CD8-positive, alpha-beta memory T cell (primary cell): ENCODE measurements at regions of chr2 and their contacts with region 1.

Region 1: DNA sequence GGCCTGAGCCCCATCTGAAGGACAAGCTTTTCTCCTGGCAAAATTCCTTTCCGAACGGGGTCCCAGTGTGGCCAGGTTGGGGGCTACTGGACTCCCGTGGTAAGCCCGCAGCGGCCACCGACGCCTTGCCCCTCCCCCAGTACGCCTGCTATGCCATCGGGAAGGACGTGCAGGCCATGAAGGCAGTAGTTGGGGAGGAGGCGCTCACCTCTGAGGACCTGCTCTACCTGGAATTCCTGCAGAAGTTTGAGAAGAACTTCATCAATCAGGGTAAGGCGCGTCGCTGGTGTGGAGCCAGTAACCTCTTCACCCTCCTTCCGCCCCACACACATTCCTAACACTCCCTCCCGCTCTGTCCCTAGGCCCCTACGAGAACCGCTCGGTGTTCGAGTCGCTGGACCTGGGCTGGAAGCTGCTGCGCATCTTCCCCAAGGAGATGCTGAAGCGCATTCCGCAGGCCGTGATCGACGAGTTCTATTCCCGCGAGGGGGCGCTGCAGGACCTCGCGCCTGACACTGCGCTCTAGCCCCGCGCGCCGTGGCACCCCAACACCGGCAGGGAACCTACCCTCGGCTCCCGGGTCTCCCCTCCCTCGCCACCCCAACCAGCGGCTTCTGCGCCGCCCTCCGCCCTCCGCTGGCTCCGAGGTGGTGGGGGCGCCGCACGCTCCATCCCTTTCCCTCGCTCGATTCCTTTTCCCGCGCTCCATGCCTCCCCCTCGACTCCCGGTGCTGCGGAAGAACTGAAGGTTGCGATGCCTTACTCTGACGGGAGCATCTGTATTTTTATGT is 13.6 kb upstream of the ANKRD53 start:
- DNase-seq: peak; percentile 75 to 84 (median 76)
- H3K4me3 ChIP-seq: peak overlapping the region; percentile 72
- H3K4me3 Mint-ChIP-seq: peak overlapping the region; percentile 69 to 90 (median 85)
- H3K27ac ChIP-seq: no peak overlapping the region
- H3K27ac Mint-ChIP-seq: peak overlapping the region in 5 of 8 donors; percentile 27 to 87 (median 60)
- H3K4me1 ChIP-seq: peaks cover 6% of the 10 kb centered on the region
- H3K4me1 Mint-ChIP-seq: peaks cover 5 to 8% (median 8%) of the 10 kb centered on the region in 3 donors
- H3K27me3 ChIP-seq: peaks cover 5% of the 10 kb centered on the region
- H3K27me3 Mint-ChIP-seq: peaks cover 15 to 29% of the 10 kb centered on the region in 2 donors

Region 2: DNA sequence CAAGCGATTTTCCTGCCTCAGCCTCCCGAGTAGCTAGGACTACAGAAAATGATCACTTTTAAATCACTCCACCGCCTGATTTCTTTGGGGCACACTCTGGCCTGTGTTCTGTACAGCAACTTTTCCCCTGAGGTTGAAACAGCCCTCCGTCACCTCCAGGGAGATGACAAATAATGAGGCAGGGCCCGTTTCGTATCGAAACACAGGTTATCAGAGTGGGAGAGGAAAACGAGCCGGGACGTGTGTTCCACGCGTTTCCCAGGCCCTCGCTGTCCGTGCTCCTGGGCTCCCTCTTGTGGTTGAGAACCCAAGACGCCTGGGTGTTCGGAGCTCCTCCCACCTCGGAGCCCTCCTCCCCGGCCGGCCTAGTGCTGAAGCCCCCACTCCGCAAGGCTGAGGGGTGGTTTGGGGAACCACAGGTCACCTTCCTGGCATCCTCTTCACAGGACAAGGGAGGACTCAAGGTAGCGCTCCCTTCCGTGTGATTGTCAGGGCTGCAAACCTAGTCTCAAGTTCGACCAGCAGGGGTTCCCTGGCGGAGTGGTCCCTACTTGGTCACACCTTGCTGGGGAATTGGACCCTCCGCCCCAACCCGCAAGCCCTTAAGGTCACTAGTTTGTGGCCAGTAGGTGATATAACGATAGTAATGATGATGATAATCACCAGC is 16.3 kb before region 1 on chr2:
- CTCF ChIA-PET with region 1: interaction called, 20 read pairs
- POLR2A ChIA-PET with region 1: no interaction called
- DNase-seq: peak; percentile 56 to 78 (median 68)
- H3K4me3 ChIP-seq: peak overlapping the region; percentile 40
- H3K4me3 Mint-ChIP-seq: peak overlapping the region; percentile 53 to 89 (median 84)
- H3K27ac ChIP-seq: no peak overlapping the region
- H3K27ac Mint-ChIP-seq: peak overlapping the region in 6 of 8 donors; percentile 12 to 89 (median 73)
- H3K4me1 ChIP-seq: peaks cover 13% of the 10 kb centered on the region
- H3K4me1 Mint-ChIP-seq: peaks cover 14 to 17% (median 17%) of the 10 kb centered on the region in 3 donors
- H3K27me3 ChIP-seq: no peaks in the 10 kb centered on the region
- H3K27me3 Mint-ChIP-seq: peaks cover 16 to 31% of the 10 kb centered on the region in 2 donors

Region 3: GRCh38 chr2:70975091-70975636 is 10.4 kb after region 1 on chr2:
- CTCF ChIA-PET with region 1: interaction called, 89 read pairs
- POLR2A ChIA-PET with region 1: no interaction called
- DNase-seq: no peak
- H3K4me3 ChIP-seq: no peak overlapping the region
- H3K4me3 Mint-ChIP-seq: no peak overlapping the region
- H3K27ac ChIP-seq: no peak overlapping the region
- H3K27ac Mint-ChIP-seq: peak overlapping the region in 3 of 8 donors; percentile 4 to 84 (median 55)
- H3K4me1 ChIP-seq: peaks cover 18% of the 10 kb centered on the region
- H3K4me1 Mint-ChIP-seq: peaks cover 15 to 23% (median 18%) of the 10 kb centered on the region in 3 donors
- H3K27me3 ChIP-seq: no peaks in the 10 kb centered on the region
- H3K27me3 Mint-ChIP-seq: peaks cover 2 to 4% of the 10 kb centered on the region in 2 donors

Region 4: GRCh38 chr2:70984576-70985282 is 19.9 kb after region 1 on chr2:
- CTCF ChIA-PET with region 1: interaction called, 89 read pairs
- POLR2A ChIA-PET with region 1: no interaction called
- DNase-seq: peak; percentile 71 to 85 (median 74)
- H3K4me3 ChIP-seq: no peak overlapping the region
- H3K4me3 Mint-ChIP-seq: peak overlapping the region in 3 of 7 donors; percentile 22 to 39 (median 23)
- H3K27ac ChIP-seq: no peak overlapping the region
- H3K27ac Mint-ChIP-seq: peak overlapping the region in 3 of 8 donors; percentile 24 to 70 (median 46)
- H3K4me1 ChIP-seq: peaks cover 7% of the 10 kb centered on the region
- H3K4me1 Mint-ChIP-seq: peaks cover 20 to 23% (median 22%) of the 10 kb centered on the region in 3 donors
- H3K27me3 ChIP-seq: no peaks in the 10 kb centered on the region
- H3K27me3 Mint-ChIP-seq: no peaks in the 10 kb centered on the region

Region 5: DNA sequence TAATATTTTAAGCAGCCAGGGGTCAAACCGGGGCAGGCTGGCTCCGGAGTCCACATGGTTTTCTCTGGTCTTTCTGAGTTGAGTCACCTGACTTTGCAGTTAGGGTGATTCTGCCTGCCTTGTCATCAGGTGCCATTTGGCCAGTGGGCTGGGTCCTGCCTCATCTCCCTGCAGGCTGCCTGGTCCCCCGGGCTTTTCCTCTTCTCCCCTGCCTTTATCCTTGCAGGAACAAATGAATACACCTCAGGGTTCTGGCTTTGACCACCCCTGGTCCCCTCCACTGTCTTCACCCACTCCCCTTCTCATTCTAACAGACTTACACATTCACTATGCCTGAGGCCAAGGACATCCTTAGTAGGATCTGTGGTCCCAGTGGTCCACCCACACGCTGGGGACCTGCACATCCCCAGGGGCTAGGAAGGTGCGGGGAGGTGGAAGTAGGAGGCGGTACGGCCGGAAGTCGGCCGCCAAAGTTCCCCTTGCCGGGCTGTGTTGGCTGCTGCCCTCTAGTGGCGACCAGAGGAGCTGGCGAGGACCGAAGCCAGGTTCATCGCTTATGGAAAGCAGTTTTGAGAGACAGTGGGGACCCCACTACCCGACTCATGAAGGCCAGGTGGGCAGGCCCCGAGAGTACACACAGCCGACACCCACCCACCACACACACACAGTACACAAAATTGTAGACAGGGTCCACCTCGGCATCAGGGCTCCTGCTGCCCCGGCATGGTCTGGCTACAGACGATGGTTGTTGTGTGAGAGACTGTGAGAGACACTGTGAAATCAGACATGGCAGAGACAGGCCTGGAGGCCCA is 36.2 kb after region 1 on chr2:
- CTCF ChIA-PET with region 1: interaction called, 46 read pairs
- POLR2A ChIA-PET with region 1: no interaction called
- DNase-seq: peak; percentile 70 to 88 (median 74)
- H3K4me3 ChIP-seq: peak overlapping the region; percentile 62
- H3K4me3 Mint-ChIP-seq: peak overlapping the region; percentile 43 to 79 (median 61)
- H3K27ac ChIP-seq: no peak overlapping the region
- H3K27ac Mint-ChIP-seq: peak overlapping the region; percentile 6 to 87 (median 57)
- H3K4me1 ChIP-seq: peaks cover 8% of the 10 kb centered on the region
- H3K4me1 Mint-ChIP-seq: peaks cover 10 to 12% (median 12%) of the 10 kb centered on the region in 3 donors
- H3K27me3 ChIP-seq: no peaks in the 10 kb centered on the region
- H3K27me3 Mint-ChIP-seq: peaks cover 6 to 9% of the 10 kb centered on the region in 2 donors

Region 6: GRCh38 chr2:71060871-71061270 is 96.1 kb after region 1 on chr2:
- CTCF ChIA-PET with region 1: no interaction called
- POLR2A ChIA-PET with region 1: no interaction called
- DNase-seq: no peak
- H3K4me3 ChIP-seq: no peak overlapping the region
- H3K4me3 Mint-ChIP-seq: no peak overlapping the region
- H3K27ac ChIP-seq: no peak overlapping the region
- H3K27ac Mint-ChIP-seq: peak overlapping the region in 2 of 8 donors; percentile 30 to 66
- H3K4me1 ChIP-seq: no peaks in the 10 kb centered on the region
- H3K4me1 Mint-ChIP-seq: no peaks in the 10 kb centered on the region
- H3K27me3 ChIP-seq: no peaks in the 10 kb centered on the region
- H3K27me3 Mint-ChIP-seq: peaks cover 9 to 27% of the 10 kb centered on the region in 2 donors